Naive thymus-derived CD4-positive, alpha-beta T cell (primary cell): ENCODE measurements at regions of chr15 and their contacts with region 1.

Region 1: GRCh38 chr15:85707519-85708338 is 87.0 kb downstream of the KLHL25 start:
- DNase-seq: peak in 1 of 9 donors; percentile 57
- ATAC-seq: peak; percentile 35
- H3K4me3 ChIP-seq: peak overlapping the region; percentile 44
- H3K4me3 Mint-ChIP-seq: peak overlapping the region; percentile 77 to 93 (median 89)
- H3K27ac ChIP-seq: peak overlapping the region; percentile 84
- H3K27ac Mint-ChIP-seq: peak overlapping the region; percentile 94 to 100 (median 98)
- H3K4me1 ChIP-seq: peaks cover 50 to 66% of the 10 kb centered on the region in 2 donors
- H3K4me1 Mint-ChIP-seq: peaks cover 48 to 89% (median 84%) of the 10 kb centered on the region in 7 donors
- H3K27me3 ChIP-seq: no peaks in the 10 kb centered on the region
- H3K27me3 Mint-ChIP-seq: no peaks in the 10 kb centered on the region

Region 2: DNA sequence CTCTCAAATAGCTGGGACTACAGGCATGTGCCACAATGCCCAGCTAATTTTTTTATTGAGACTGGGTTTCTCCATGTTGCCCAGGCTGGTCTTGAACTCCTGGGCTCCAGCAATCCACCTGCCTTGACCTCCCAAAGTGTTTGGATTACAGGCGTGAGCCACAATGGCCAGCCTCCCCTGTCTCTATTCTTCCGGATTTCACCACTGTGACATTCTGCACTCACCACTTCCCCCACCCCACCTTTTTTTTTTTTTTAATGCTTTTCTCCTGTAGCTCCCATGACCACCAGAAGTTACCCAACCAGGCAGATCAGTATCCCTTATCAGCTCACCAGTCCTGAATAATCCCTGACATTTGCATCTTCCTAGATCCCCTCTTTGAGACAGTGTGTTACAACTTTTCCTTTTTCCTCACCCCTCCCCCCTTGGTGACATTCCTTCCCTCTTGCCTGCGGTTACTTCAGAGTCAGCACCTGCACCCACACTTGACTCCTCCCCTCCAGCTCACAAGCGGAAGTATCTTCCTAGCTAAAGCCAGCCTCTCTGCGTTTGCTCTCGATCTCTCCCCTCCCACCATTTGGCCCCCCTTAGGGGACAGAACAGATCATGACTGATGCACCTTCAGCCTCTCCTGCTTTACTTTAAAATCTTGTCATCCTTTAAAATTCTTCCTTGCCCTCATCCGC is 972.8 kb before region 1 on chr15:
- CTCF ChIA-PET with region 1: no interaction called
- POLR2A ChIA-PET with region 1: no interaction called
- intact Hi-C with region 1: loop called in 1 of 2 experiments (anchors 10 kb)
- DNase-seq: peak in 8 of 9 donors; percentile 69 to 83 (median 78)
- ATAC-seq: peak; percentile 85
- H3K4me3 ChIP-seq: peak overlapping the region; percentile 56
- H3K4me3 Mint-ChIP-seq: peak overlapping the region; percentile 71 to 89 (median 84)
- H3K27ac ChIP-seq: peak overlapping the region; percentile 67
- H3K27ac Mint-ChIP-seq: peak overlapping the region; percentile 89 to 96 (median 93)
- H3K4me1 ChIP-seq: peaks cover 34 to 47% of the 10 kb centered on the region in 2 donors
- H3K4me1 Mint-ChIP-seq: peaks cover 36 to 62% (median 50%) of the 10 kb centered on the region in 7 donors
- H3K27me3 ChIP-seq: no peaks in the 10 kb centered on the region
- H3K27me3 Mint-ChIP-seq: no peaks in the 10 kb centered on the region

Region 3: GRCh38 chr15:85330901-85331588 is 376.7 kb before region 1 on chr15:
- CTCF ChIA-PET with region 1: no interaction called
- POLR2A ChIA-PET with region 1: no interaction called
- intact Hi-C with region 1: loop called (anchors 5 kb)
- DNase-seq: peak; percentile 12 to 71 (median 44)
- ATAC-seq: peak; percentile 70
- H3K4me3 ChIP-seq: peak overlapping the region; percentile 57
- H3K4me3 Mint-ChIP-seq: peak overlapping the region; percentile 88 to 100 (median 96)
- H3K27ac ChIP-seq: peak overlapping the region; percentile 65
- H3K27ac Mint-ChIP-seq: peak overlapping the region; percentile 74 to 97 (median 95)
- H3K4me1 ChIP-seq: peaks cover 18 to 24% of the 10 kb centered on the region in 2 donors
- H3K4me1 Mint-ChIP-seq: peaks cover 34 to 54% (median 47%) of the 10 kb centered on the region in 7 donors
- H3K27me3 ChIP-seq: no peaks in the 10 kb centered on the region
- H3K27me3 Mint-ChIP-seq: no peaks in the 10 kb centered on the region

Region 4: DNA sequence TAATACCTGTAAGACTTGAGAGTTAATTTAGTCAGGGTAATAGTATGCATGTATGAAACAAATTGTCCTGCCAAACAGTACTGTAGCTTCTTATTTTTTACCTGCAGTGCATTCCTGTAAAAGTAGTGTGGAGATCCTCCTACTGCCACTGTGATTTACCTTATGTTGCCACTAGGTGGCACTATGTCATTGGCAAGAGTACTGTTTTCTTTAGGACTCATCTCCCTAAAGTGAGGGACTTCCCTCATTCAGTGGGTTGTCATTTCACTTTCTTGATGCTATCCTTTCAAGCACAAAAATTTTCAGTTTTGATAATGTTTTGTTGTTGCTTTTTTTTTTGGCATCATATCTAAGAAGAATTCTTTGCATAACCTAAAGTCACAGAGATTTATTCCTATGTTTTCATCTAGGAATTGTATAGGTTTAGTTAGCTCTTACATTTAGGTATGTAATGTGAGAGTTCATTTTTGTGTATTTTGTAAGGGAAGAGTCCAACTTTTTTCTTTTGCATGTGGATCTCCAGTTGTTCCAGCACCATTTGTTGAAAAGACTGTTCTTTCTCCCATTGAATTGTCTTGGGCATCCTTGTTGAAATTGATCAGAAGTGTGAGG is 221.7 kb before region 1 on chr15:
- CTCF ChIA-PET with region 1: no interaction called
- POLR2A ChIA-PET with region 1: no interaction called
- intact Hi-C with region 1: loop called (anchors 5 kb)
- DNase-seq: peak in 8 of 9 donors; percentile 50 to 73 (median 66)
- ATAC-seq: peak; percentile 96
- H3K4me3 ChIP-seq: no peak overlapping the region
- H3K4me3 Mint-ChIP-seq: no peak overlapping the region
- H3K27ac ChIP-seq: no peak overlapping the region
- H3K27ac Mint-ChIP-seq: peak overlapping the region in 4 of 9 donors; percentile 2 to 73 (median 56)
- H3K4me1 ChIP-seq: peaks cover 16 to 17% of the 10 kb centered on the region in 2 donors
- H3K4me1 Mint-ChIP-seq: peaks cover 45 to 84% (median 70%) of the 10 kb centered on the region in 7 donors
- H3K27me3 ChIP-seq: no peaks in the 10 kb centered on the region
- H3K27me3 Mint-ChIP-seq: no peaks in the 10 kb centered on the region

Region 5: DNA sequence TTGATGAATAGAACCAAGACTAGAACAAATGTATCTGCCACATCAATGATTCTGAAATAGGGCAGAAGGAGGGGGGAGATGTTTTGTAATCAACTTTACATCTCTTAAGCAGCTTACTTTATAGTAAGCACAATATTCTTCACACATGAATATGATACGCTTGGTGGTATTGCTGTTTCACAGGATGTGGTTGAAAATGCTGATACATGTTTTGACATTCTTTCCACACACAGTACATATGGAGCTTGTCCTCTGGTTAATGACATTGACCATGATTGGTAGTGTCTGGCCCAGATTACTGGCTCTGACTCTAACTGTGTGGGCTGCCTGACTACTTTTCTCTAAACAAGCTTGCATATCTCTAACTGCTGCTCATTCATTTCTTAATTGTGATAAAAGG is 81.9 kb before region 1 on chr15:
- CTCF ChIA-PET with region 1: interaction called, 3 read pairs
- POLR2A ChIA-PET with region 1: no interaction called
- intact Hi-C with region 1: loop called in 1 of 2 experiments (anchors 1 kb)
- DNase-seq: peak in 4 of 9 donors; percentile 11 to 38 (median 28)
- ATAC-seq: peak; percentile 79
- H3K4me3 ChIP-seq: no peak overlapping the region
- H3K4me3 Mint-ChIP-seq: peak overlapping the region; percentile 40 to 80 (median 65)
- H3K27ac ChIP-seq: no peak overlapping the region
- H3K27ac Mint-ChIP-seq: peak overlapping the region; percentile 5 to 88 (median 73)
- H3K4me1 ChIP-seq: peaks cover 26 to 44% of the 10 kb centered on the region in 2 donors
- H3K4me1 Mint-ChIP-seq: peaks cover 48 to 71% (median 58%) of the 10 kb centered on the region in 7 donors
- H3K27me3 ChIP-seq: no peaks in the 10 kb centered on the region
- H3K27me3 Mint-ChIP-seq: no peaks in the 10 kb centered on the region

Region 6: GRCh38 chr15:85667491-85668424 is 40.0 kb before region 1 on chr15:
- CTCF ChIA-PET with region 1: no interaction called
- POLR2A ChIA-PET with region 1: no interaction called
- intact Hi-C with region 1: loop called in 1 of 2 experiments (anchors 1 kb)
- DNase-seq: peak in 8 of 9 donors; percentile 37 to 78 (median 67)
- ATAC-seq: peak; percentile 96
- H3K4me3 ChIP-seq: no peak overlapping the region
- H3K4me3 Mint-ChIP-seq: peak overlapping the region in 6 of 10 donors; percentile 38 to 60 (median 53)
- H3K27ac ChIP-seq: peak overlapping the region; percentile 65
- H3K27ac Mint-ChIP-seq: peak overlapping the region; percentile 89 to 95 (median 92)
- H3K4me1 ChIP-seq: peaks cover 17% of the 10 kb centered on the region in 2 donors
- H3K4me1 Mint-ChIP-seq: peaks cover 19 to 25% (median 21%) of the 10 kb centered on the region in 7 donors
- H3K27me3 ChIP-seq: no peaks in the 10 kb centered on the region
- H3K27me3 Mint-ChIP-seq: no peaks in the 10 kb centered on the region

Region 7: GRCh38 chr15:85723960-85724945 is 16.5 kb after region 1 on chr15:
- CTCF ChIA-PET with region 1: interaction called, 3 read pairs
- POLR2A ChIA-PET with region 1: interaction called, 3 read pairs
- intact Hi-C with region 1: loop called in 1 of 2 experiments (anchors 1 kb)
- DNase-seq: peak in 3 of 9 donors; percentile 18 to 26 (median 23)
- ATAC-seq: peak; percentile 89
- H3K4me3 ChIP-seq: no peak overlapping the region
- H3K4me3 Mint-ChIP-seq: peak overlapping the region in 8 of 10 donors; percentile 3 to 66 (median 44)
- H3K27ac ChIP-seq: peak overlapping the region; percentile 34
- H3K27ac Mint-ChIP-seq: peak overlapping the region; percentile 85 to 99 (median 92)
- H3K4me1 ChIP-seq: peaks cover 8 to 18% of the 10 kb centered on the region in 2 donors
- H3K4me1 Mint-ChIP-seq: peaks cover 20 to 43% (median 35%) of the 10 kb centered on the region in 7 donors
- H3K27me3 ChIP-seq: no peaks in the 10 kb centered on the region
- H3K27me3 Mint-ChIP-seq: no peaks in the 10 kb centered on the region